Esophagus muscularis mucosa (tissue), 4 donors: ENCODE measurements at regions of chr13 and their contacts with region 1.

Region 1: DNA sequence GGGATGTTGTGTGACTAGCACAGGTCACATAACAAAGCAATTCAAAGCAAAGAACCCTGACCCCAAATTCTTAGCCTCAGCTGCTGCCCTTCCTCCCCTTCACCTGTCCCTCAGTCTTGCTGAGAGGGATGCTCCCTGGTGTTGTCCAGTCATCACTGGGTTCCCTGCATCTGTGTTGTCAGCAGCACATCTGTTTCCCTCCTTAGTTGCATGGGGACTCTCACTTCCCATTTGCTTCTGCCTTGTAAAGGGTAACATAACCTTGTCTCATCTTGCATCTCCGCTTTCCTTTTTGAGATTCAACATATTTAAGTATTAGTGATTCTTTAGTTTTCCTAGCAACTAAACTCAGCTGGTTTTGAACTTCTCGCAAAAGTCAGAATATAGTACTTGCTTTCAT is 54.0 kb downstream of the SPATA13 start:
- DNase-seq: no peak
- H3K4me3 ChIP-seq: no peak overlapping the region
- H3K27ac ChIP-seq: no peak overlapping the region
- H3K4me1 ChIP-seq: peaks cover 14 to 37% (median 31%) of the 10 kb centered on the region in 4 donors
- H3K27me3 ChIP-seq: no peaks in the 10 kb centered on the region
- CTCF ChIP-seq: no peak
- EP300 ChIP-seq: no peak
- POLR2A ChIP-seq: no peak

Region 2: GRCh38 chr13:24160454-24161009 is 54.0 kb before region 1 on chr13 and contains the start of gene SPATA13:
- intact Hi-C with region 1: loop called (anchors 5 kb)
- DNase-seq: peak; percentile 96
- H3K4me3 ChIP-seq: peak within 1 kb of the TSS; percentile 68 to 88 (median 73)
- H3K27ac ChIP-seq: peak within 1 kb of the TSS; percentile 65 to 80 (median 72)
- H3K4me1 ChIP-seq: peaks cover 13 to 40% (median 30%) of the 10 kb centered on the region in 4 donors
- H3K27me3 ChIP-seq: peaks cover 0 to 44% (median 4%) of the 10 kb centered on the region in 4 donors
- CTCF ChIP-seq: no peak
- EP300 ChIP-seq: no peak
- POLR2A ChIP-seq: no peak
- total RNA-seq, gene SPATA13: 9.1 to 21.6 (median 17.1) TPM

Region 3: DNA sequence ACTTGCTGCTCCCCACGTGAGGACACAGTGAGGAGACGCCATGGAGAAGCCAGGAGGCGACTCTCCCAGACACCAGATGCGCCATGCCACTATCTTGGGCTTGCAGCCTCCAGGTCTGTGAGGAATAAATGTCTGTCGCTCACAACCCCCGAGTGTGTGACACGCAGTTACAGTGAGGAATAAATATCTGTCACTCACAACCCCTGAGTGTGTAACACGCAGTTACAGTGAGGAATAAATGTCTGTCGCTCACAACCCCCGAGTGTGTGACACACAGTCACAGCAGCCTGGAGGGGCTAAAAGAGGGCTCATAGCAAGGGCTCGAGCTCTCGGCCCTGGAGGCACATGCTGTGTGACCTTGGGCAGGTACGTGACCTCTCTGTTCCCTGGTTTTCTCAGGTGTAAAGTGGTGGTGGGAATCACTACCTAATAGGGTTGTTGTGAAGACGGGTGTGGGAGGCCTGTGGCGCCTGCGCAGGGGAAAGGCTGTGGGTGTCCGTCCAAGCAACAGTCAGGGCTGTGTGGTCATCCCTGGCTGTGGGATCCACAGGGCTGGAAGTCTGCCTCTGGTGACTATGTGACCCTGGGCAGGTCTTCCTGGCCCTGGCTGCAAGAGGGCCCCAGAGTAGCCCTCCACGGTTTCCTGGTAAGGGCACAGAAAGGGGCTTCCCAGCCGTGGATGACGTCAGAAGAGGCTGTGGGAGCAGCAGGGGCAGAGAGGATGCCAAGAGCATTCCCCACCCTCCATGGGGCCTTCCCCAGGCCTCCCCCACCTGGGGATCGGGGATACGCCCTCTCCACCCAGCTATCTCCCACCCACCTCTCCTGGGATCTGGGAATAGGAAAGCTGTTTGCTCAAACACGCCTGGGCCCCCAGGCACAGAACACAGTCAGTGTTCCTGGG is 172.5 kb after region 1 on chr13:
- intact Hi-C with region 1: no loop called
- DNase-seq: no peak
- H3K4me3 ChIP-seq: no peak overlapping the region
- H3K27ac ChIP-seq: no peak overlapping the region
- H3K4me1 ChIP-seq: no peaks in the 10 kb centered on the region
- H3K27me3 ChIP-seq: no peaks in the 10 kb centered on the region
- CTCF ChIP-seq: no peak
- EP300 ChIP-seq: no peak
- POLR2A ChIP-seq: no peak